CD14-positive monocyte (primary cell): ENCODE measurements at regions of chr2 and their contacts with region 1.

Region 1: DNA sequence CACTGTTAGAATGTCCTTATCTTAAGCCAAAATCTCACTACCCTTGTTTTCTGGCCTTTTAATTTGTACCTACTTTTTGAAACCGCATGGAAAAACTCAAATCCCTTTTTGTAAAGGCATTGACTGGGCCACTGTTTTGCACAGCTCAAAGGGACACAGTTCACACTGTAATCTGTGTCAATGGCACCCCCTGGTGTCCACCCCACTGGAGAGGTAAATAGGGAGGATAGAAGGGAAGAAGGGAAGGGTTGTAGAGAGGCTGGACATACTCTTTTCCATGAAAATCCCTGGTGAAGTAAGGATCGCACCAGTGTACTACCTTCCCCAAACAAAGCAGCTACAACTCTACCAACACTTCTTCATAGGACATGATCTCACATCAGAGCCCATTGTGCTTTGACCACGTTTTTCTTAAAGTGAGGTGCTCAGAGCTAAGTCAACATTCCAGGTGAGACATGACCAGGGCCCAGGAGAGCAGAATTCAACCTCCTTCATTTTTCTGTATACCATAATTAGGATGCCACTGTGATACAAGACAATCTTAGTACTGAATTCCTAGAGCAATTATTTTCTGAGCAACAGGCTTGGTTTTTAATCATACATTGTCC is 92.4 kb upstream of the RMDN2 start:
- DNase-seq: peak; percentile 75 to 80 (median 79)
- H3K4me3 ChIP-seq: peak overlapping the region in 1 of 3 experiments; percentile 37
- H3K4me3 Mint-ChIP-seq: peak overlapping the region in 1 of 2 donors; percentile 75
- H3K27ac ChIP-seq: peak overlapping the region in 1 of 2 donors; percentile 97
- H3K27ac Mint-ChIP-seq: peak overlapping the region in 6 of 7 donors; percentile 18 to 90 (median 76)
- H3K4me1 ChIP-seq: peaks cover 50 to 51% of the 10 kb centered on the region in 2 donors
- H3K4me1 Mint-ChIP-seq: peaks cover 56% of the 10 kb centered on the region
- H3K27me3 ChIP-seq: no peaks in the 10 kb centered on the region
- H3K27me3 Mint-ChIP-seq: peaks cover 0 to 3% (median 0%) of the 10 kb centered on the region in 3 donors
- CTCF ChIP-seq: peak; percentile 88

Region 2: GRCh38 chr2:37389989-37390765 is 442.5 kb before region 1 on chr2:
- intact Hi-C with region 1: loop called in 1 of 2 experiments (anchors 2 kb)
- DNase-seq: peak; percentile 86 to 99 (median 90)
- H3K4me3 ChIP-seq: peak overlapping the region in 1 of 3 experiments; percentile 49
- H3K4me3 Mint-ChIP-seq: peak overlapping the region; percentile 48 to 80
- H3K27ac ChIP-seq: peak overlapping the region; percentile 77 to 83
- H3K27ac Mint-ChIP-seq: peak overlapping the region in 5 of 7 donors; percentile 94 to 99 (median 98)
- H3K4me1 ChIP-seq: peaks cover 55 to 58% of the 10 kb centered on the region in 2 donors
- H3K4me1 Mint-ChIP-seq: peaks cover 21% of the 10 kb centered on the region
- H3K27me3 ChIP-seq: no peaks in the 10 kb centered on the region
- H3K27me3 Mint-ChIP-seq: peaks cover 0 to 2% (median 2%) of the 10 kb centered on the region in 3 donors
- CTCF ChIP-seq: no peak

Region 3: GRCh38 chr2:37414470-37414949 is 418.2 kb before region 1 on chr2:
- intact Hi-C with region 1: loop called (anchors 1 to 10 kb)
- DNase-seq: peak; percentile 49 to 73 (median 59)
- H3K4me3 ChIP-seq: peak overlapping the region in 2 of 3 experiments; percentile 23 to 40
- H3K4me3 Mint-ChIP-seq: peak overlapping the region; percentile 20 to 71
- H3K27ac ChIP-seq: no peak overlapping the region
- H3K27ac Mint-ChIP-seq: peak overlapping the region in 1 of 7 donors; percentile 21
- H3K4me1 ChIP-seq: peaks cover 8 to 10% of the 10 kb centered on the region in 2 donors
- H3K4me1 Mint-ChIP-seq: peaks cover 14% of the 10 kb centered on the region
- H3K27me3 ChIP-seq: no peaks in the 10 kb centered on the region
- H3K27me3 Mint-ChIP-seq: peaks cover 0 to 4% (median 0%) of the 10 kb centered on the region in 3 donors
- CTCF ChIP-seq: peak; percentile 88

Region 4: GRCh38 chr2:37635504-37636380 is 197.0 kb before region 1 on chr2:
- intact Hi-C with region 1: loop called in 1 of 2 experiments (anchors 10 kb)
- DNase-seq: peak; percentile 97 to 100 (median 99)
- H3K4me3 ChIP-seq: peak overlapping the region in 1 of 3 experiments; percentile 26
- H3K4me3 Mint-ChIP-seq: peak overlapping the region; percentile 34 to 48
- H3K27ac ChIP-seq: peak overlapping the region; percentile 98 to 99
- H3K27ac Mint-ChIP-seq: peak overlapping the region; percentile 99 to 100 (median 99)
- H3K4me1 ChIP-seq: peaks cover 50 to 60% of the 10 kb centered on the region in 2 donors
- H3K4me1 Mint-ChIP-seq: peaks cover 59% of the 10 kb centered on the region
- H3K27me3 ChIP-seq: no peaks in the 10 kb centered on the region
- H3K27me3 Mint-ChIP-seq: peaks cover 0 to 4% (median 2%) of the 10 kb centered on the region in 3 donors
- CTCF ChIP-seq: no peak

Region 5: DNA sequence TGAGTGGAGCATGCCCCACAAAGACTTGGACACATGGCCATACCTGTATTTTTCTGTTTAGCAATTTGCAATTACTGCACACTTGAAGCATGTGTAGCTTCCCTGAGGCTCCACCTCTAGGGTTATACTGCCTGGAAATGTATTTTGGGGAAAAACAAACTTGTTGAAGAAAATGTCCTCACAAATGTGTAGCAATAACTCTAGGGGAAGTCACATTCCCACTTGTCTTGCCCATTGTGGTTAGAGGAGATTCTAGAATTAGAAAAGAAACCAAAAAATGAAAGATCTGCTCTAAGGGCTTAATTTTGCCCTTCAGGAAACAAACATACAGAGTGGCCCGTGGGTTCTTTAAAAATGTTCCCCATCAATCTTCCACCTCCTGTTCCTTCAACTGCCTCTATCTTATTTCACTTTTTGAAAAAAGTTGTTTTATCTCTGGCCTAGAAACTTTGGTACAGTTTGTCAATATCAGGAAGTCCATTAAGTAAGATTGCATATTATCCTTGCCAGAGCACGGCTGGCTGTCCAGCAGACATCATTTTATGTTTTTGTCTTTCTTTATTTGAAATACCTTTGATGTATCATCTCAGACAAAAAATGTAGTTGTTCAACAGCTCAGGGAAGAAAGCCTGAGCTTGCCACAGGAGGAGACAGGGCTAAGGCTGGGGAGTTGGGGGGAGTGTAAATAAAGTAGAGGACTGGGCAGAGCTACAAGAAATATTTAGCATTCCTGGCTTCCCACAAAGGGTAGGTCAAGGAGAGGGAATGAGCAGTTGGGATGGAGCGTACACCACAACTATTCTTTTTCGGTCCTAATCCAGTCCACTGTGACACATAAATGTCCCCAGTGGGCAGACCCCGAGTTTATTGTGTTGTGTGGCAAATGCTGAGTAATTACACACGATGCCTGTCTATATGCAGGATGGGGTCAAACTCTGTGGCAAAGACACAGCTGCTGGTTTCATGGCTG is 64.5 kb before region 1 on chr2:
- intact Hi-C with region 1: loop called in 1 of 2 experiments (anchors 5 kb)
- DNase-seq: peak; percentile 25 to 56 (median 53)
- H3K4me3 ChIP-seq: peak overlapping the region in 1 of 3 experiments; percentile 56
- H3K4me3 Mint-ChIP-seq: peak overlapping the region; percentile 27 to 85
- H3K27ac ChIP-seq: peak overlapping the region; percentile 84 to 89
- H3K27ac Mint-ChIP-seq: peak overlapping the region; percentile 92 to 99 (median 95)
- H3K4me1 ChIP-seq: peaks cover 73 to 83% of the 10 kb centered on the region in 2 donors
- H3K4me1 Mint-ChIP-seq: peaks cover 83% of the 10 kb centered on the region
- H3K27me3 ChIP-seq: no peaks in the 10 kb centered on the region
- H3K27me3 Mint-ChIP-seq: peaks cover 0 to 5% (median 0%) of the 10 kb centered on the region in 3 donors
- CTCF ChIP-seq: no peak